RWPE1 (cell line): ENCODE measurements at regions of chr4 and their contacts with region 1.

Region 1: GRCh38 chr4:76504613-76505465 is 69.8 kb downstream of the SHROOM3 start:
- DNase-seq: peak; percentile 49
- H3K27ac ChIP-seq: no peak overlapping the region
- CTCF ChIP-seq: peak; percentile 76

Region 2: DNA sequence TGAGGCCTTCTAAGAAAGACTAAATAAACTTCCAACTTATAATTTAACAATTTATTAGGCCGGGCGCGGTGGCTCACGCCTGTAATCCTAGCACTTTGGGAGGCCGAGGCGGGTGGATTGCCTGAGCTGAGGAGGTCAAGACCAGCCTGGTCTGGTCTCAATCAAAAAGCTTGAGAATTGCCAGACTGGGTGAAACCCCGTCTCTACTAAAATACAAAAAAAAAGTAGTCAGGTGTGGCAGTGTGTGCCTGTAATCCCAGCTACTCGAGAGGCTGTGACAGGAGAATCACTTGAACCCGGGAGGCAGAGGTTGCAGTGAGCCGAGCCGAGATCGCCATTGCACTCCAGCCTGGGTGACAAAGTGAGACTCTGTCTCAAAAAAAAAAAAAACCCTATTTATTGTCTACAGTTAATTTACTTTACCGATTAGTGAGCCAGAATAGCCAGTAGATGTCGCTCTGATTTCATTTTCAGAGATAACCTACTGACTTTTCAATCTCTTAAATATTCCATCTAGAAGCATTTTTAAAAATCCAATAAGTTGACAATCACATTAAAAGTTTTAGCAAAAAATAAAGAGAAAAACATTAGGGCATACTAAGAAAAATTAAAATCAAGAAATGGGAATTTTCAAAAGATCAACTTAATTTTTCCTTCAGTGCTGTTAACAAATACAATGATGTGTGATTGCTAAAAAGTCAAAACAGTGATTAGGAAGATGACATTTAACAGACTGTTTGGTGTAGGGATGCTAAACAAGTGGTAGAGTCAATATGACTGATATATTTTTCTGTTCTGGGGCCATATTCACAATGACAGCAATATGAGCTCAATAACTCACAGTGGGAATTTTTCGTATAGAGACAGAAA is 74.1 kb before region 1 on chr4:
- CTCF ChIA-PET with region 1: interaction called, 34 read pairs
- POLR2A ChIA-PET with region 1: no interaction called
- DNase-seq: peak; percentile 63
- H3K27ac ChIP-seq: no peak overlapping the region
- CTCF ChIP-seq: peak; percentile 90